ENCODE measurements at regions of chr19 and their contacts with region 1.

Region 1: DNA sequence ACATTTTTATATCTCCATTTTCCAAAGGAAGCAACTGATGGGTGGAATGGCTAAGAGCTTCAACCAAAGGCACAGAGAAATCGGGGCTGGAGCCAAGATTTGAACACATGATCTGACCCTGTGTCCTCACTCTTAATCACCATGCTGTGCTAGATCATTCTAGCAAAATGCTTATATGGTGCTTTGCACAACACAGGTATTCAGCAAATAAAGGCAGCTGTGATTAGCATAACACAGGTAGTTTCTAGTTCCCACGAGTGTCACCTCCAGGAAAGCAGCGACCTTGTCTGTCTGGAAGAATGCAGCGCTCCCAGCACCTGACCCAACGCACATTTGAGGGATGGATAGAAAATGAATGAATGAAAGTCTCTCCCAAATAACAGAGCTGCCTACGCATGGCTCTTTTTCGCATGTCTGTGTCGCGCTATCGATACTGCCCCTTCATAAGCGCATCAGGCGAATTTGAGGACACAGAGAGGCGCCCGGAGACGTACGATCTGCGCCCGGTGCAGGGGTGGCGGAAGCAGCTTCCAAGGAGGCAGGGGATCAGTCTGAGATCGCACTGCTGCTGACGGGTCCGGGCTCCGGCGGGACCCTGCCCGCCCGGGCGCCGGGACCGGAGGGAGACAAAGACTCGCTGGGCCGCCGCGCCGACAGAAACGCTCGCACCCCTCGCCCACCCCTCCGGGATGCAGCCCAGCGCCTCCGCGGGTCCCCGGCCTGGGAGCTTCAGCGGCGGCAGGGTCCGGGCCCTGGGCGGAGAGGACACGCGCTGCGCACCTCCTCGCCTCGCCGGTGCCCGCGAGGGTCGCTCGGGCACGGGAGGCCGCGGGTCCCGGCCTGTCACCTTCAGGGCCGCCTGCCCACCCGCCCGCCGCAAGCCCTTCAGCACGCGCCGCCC is 609 bp downstream of the EPS15L1 start:
- DNase-seq: peak in 1 of 10 donors; percentile 14
- ATAC-seq: peak; percentile 16 to 29
- H3K4me3 Mint-ChIP-seq: peak overlapping the region; percentile 77 to 91 (median 88)
- H3K27ac Mint-ChIP-seq: peak overlapping the region in 9 of 10 donors; percentile 27 to 90 (median 79)
- H3K4me1 Mint-ChIP-seq: peaks cover 28 to 46% (median 44%) of the 10 kb centered on the region in 4 donors
- H3K27me3 Mint-ChIP-seq: no peaks in the 10 kb centered on the region

Region 2: GRCh38 chr19:16495982-16496612 is 24.9 kb after region 1 on chr19 and contains the starts of genes C19orf44 and CALR3:
- POLR2A ChIA-PET with region 1: interaction called, 12 read pairs
- DNase-seq: peak; percentile 91 to 97 (median 96)
- ATAC-seq: peak; percentile 97 to 99
- H3K4me3 Mint-ChIP-seq: peak within 1 kb of the TSS; percentile 88 to 99 (median 95)
- H3K27ac Mint-ChIP-seq: peak within 1 kb of the TSS; percentile 88 to 97 (median 94)
- H3K4me1 Mint-ChIP-seq: peaks cover 7 to 16% (median 11%) of the 10 kb centered on the region in 4 donors
- H3K27me3 Mint-ChIP-seq: no peaks in the 10 kb centered on the region
- polyA plus RNA-seq, gene C19orf44: 0.23 to 2.0 TPM in 2 of 3 donors, not detected in the other
- polyA plus RNA-seq, gene CALR3: not detected

Region 3: DNA sequence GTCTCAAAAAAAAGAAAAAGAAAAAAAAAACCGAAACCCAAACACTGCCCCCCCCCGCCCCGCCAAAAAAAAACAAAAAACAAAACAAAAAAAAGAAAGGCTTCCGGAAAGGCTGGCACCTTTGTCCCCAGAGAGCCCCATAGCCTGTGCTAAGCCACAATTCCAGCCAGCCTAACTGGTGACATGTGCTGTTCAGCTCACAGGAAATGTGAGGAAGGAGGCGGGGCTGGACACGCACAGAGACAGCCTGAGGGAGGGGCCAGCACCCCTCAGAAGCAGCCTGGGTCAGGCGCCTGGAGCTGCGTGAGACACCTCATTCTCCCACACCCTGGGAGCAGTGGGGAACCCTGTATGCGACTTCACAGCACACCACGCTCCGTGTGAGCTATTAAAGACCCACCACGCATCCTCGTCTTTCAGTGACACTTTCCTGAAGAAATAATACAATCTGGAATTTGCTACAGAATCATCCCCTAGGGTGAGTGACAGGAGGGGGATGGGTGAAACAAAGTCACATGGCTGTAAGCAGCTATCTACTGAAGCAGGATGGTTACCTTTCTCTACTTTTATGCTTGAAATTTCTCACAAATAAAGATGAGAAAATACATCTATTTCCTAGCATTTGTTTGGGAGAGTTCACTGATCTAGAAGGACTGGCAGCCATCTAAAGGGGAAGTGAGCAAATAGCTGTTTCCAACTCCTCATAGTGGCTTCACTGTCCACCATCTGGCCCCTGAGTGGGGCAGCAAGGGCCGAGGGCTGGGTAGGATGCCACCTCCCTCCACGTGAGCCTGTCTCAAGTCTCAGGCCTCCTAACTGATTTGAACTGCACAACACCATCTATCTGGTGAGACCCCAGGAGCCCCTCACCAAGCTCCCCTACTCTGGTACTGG is 113.3 kb after region 1 on chr19:
- POLR2A ChIA-PET with region 1: no interaction called
- DNase-seq: peak; percentile 72 to 91 (median 86)
- ATAC-seq: peak; percentile 79 to 84
- H3K4me3 Mint-ChIP-seq: peak overlapping the region; percentile 64 to 87 (median 78)
- H3K27ac Mint-ChIP-seq: peak overlapping the region; percentile 51 to 97 (median 92)
- H3K4me1 Mint-ChIP-seq: peaks cover 23 to 94% (median 89%) of the 10 kb centered on the region in 4 donors
- H3K27me3 Mint-ChIP-seq: no peaks in the 10 kb centered on the region

Measured in naive thymus-derived CD8-positive, alpha-beta T cell (primary cell).